Pancreas (tissue), 10 donors: ENCODE measurements at regions of chr3 and their contacts with region 1.

Region 1: GRCh38 chr3:66816090-66816761 is 181.9 kb upstream of the KBTBD8 start:
- DNase-seq: no peak
- ATAC-seq: peak; percentile 70 to 84 (median 75)
- H3K4me3 ChIP-seq: no peak overlapping the region
- H3K27ac ChIP-seq: no peak overlapping the region
- H3K4me1 ChIP-seq: peaks cover 19 to 49% (median 20%) of the 10 kb centered on the region in 3 donors
- H3K27me3 ChIP-seq: no peaks in the 10 kb centered on the region
- CTCF ChIP-seq: peak in 3 of 4 donors; percentile 33 to 51 (median 38)

Region 2: GRCh38 chr3:66407611-66408218 is 408.5 kb before region 1 on chr3:
- intact Hi-C with region 1: loop called in 2 of 3 experiments (anchors 5 kb)
- DNase-seq: peak in 5 of 6 donors; percentile 62 to 91 (median 79)
- ATAC-seq: peak; percentile 63 to 89 (median 84)
- H3K4me3 ChIP-seq: no peak overlapping the region
- H3K27ac ChIP-seq: no peak overlapping the region
- H3K4me1 ChIP-seq: peaks cover 3 to 16% (median 12%) of the 10 kb centered on the region in 3 donors
- H3K27me3 ChIP-seq: no peaks in the 10 kb centered on the region
- CTCF ChIP-seq: peak; percentile 81 to 92 (median 87)

Region 3: GRCh38 chr3:66413151-66413751 is 403.0 kb before region 1 on chr3:
- intact Hi-C with region 1: loop called in 2 of 3 experiments (anchors 5 kb)
- DNase-seq: peak in 1 of 6 donors; percentile 43
- ATAC-seq: no peak
- H3K4me3 ChIP-seq: no peak overlapping the region
- H3K27ac ChIP-seq: no peak overlapping the region
- H3K4me1 ChIP-seq: peaks cover 12 to 17% (median 14%) of the 10 kb centered on the region in 3 donors
- H3K27me3 ChIP-seq: no peaks in the 10 kb centered on the region
- CTCF ChIP-seq: no peak

Region 4: GRCh38 chr3:66456711-66457173 is 359.5 kb before region 1 on chr3:
- intact Hi-C with region 1: no loop called
- DNase-seq: no peak
- ATAC-seq: peak in 3 of 4 donors; percentile 11 to 23 (median 13)
- H3K4me3 ChIP-seq: no peak overlapping the region
- H3K27ac ChIP-seq: no peak overlapping the region
- H3K4me1 ChIP-seq: peaks cover 18 to 23% (median 18%) of the 10 kb centered on the region in 3 donors
- H3K27me3 ChIP-seq: no peaks in the 10 kb centered on the region
- CTCF ChIP-seq: no peak

Region 5: GRCh38 chr3:66500576-66501482 is 315.4 kb before region 1 on chr3 and contains the start of gene LRIG1:
- intact Hi-C with region 1: loop called in 1 of 3 experiments (anchors 10 kb)
- DNase-seq: peak; percentile 100
- ATAC-seq: peak; percentile 77 to 91 (median 82)
- H3K4me3 ChIP-seq: peak within 1 kb of the TSS; percentile 86 to 100 (median 94)
- H3K27ac ChIP-seq: peak within 1 kb of the TSS; percentile 87 to 99 (median 94)
- H3K4me1 ChIP-seq: peaks cover 3 to 37% (median 23%) of the 10 kb centered on the region in 3 donors
- H3K27me3 ChIP-seq: no peaks in the 10 kb centered on the region
- CTCF ChIP-seq: peak in 3 of 4 donors; percentile 19 to 46 (median 38)
- total RNA-seq, gene LRIG1: 57.8 to 104 (median 80.5) TPM